ENCODE measurements at regions of chr6 and their contacts with region 1.

Region 1: GRCh38 chr6:54897462-54898189 is 51.1 kb downstream of the FAM83B start:
- DNase-seq: no peak
- ATAC-seq: no peak
- H3K4me3 ChIP-seq: no peak overlapping the region
- H3K27ac ChIP-seq: no peak overlapping the region
- H3K4me1 ChIP-seq: no peaks in the 10 kb centered on the region
- H3K27me3 ChIP-seq: no peaks in the 10 kb centered on the region
- CTCF ChIP-seq: no peak

Region 2: GRCh38 chr6:54873434-54873967 is 24.1 kb before region 1 on chr6:
- CTCF ChIA-PET with region 1: interaction called, 12 read pairs
- POLR2A ChIA-PET with region 1: no interaction called
- in situ Hi-C with region 1: no loop called
- intact Hi-C with region 1: no loop called
- DNase-seq: no peak
- ATAC-seq: no peak
- H3K4me3 ChIP-seq: no peak overlapping the region
- H3K27ac ChIP-seq: no peak overlapping the region
- H3K4me1 ChIP-seq: no peaks in the 10 kb centered on the region
- H3K27me3 ChIP-seq: no peaks in the 10 kb centered on the region
- CTCF ChIP-seq: no peak

Region 3: GRCh38 chr6:54916862-54917261 is 19.2 kb after region 1 on chr6:
- CTCF ChIA-PET with region 1: no interaction called
- POLR2A ChIA-PET with region 1: no interaction called
- in situ Hi-C with region 1: no loop called
- intact Hi-C with region 1: no loop called
- DNase-seq: peak; percentile 71
- ATAC-seq: peak; percentile 66; the same call in 1 of the 2 replicates
- H3K4me3 ChIP-seq: no peak overlapping the region
- H3K27ac ChIP-seq: no peak overlapping the region
- H3K4me1 ChIP-seq: no peaks in the 10 kb centered on the region
- H3K27me3 ChIP-seq: no peaks in the 10 kb centered on the region
- CTCF ChIP-seq: no peak

Region 4: GRCh38 chr6:55088902-55089301 is 191.3 kb after region 1 on chr6:
- CTCF ChIA-PET with region 1: no interaction called
- POLR2A ChIA-PET with region 1: no interaction called
- in situ Hi-C with region 1: no loop called
- intact Hi-C with region 1: no loop called
- DNase-seq: no peak
- ATAC-seq: no peak
- H3K4me3 ChIP-seq: no peak overlapping the region
- H3K27ac ChIP-seq: no peak overlapping the region
- H3K4me1 ChIP-seq: no peaks in the 10 kb centered on the region
- H3K27me3 ChIP-seq: no peaks in the 10 kb centered on the region
- CTCF ChIP-seq: no peak

Measured in Panc1 (cell line).